ENCODE measurements at regions of chr10 and their contacts with region 1.

Region 1: GRCh38 chr10:77605466-77605865 is 32.1 kb downstream of the KCNMA1 start:
- DNase-seq: peak; percentile 55
- ATAC-seq: peak; percentile 69
- H3K4me3 Mint-ChIP-seq: no peak overlapping the region
- H3K27ac Mint-ChIP-seq: 0 out of 2 replicates have a peak overlapping the region, but pooled peaks have one; percentile 29
- H3K4me1 Mint-ChIP-seq: peaks cover 21% of the 10 kb centered on the region
- H3K27me3 Mint-ChIP-seq: no peaks in the 10 kb centered on the region
- CTCF ChIP-seq: no peak

Region 2: DNA sequence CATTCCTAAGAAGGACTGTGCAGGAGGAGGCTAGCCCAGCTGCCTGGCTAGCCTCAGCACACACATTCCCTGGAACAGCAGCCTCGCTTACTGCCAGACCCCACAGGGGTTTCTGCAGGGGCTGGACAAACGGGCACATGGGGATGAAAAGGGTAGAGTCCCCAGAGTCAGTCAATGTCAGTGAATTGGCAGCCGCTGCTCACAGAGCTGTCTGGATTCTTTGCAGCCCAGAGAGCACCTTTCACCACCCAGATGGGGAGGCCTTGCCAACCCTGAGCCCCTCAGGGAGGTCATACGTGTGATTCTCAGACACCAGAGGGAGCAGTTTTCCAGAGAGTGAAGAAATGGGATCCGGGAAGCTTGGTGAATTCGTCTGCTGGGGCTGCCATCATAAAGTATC is 111.1 kb before region 1 on chr10:
- CTCF ChIA-PET with region 1: interaction called, 15 read pairs
- POLR2A ChIA-PET with region 1: no interaction called
- DNase-seq: peak; percentile 38
- ATAC-seq: peak; percentile 82
- H3K4me3 Mint-ChIP-seq: no peak overlapping the region
- H3K27ac Mint-ChIP-seq: no peak overlapping the region
- H3K4me1 Mint-ChIP-seq: peaks cover 2% of the 10 kb centered on the region
- H3K27me3 Mint-ChIP-seq: no peaks in the 10 kb centered on the region
- CTCF ChIP-seq: 0 out of 2 replicates have a peak, but pooled peaks have one; percentile 26